ENCODE measurements at regions of chr11 and their contacts with region 1.

Region 1: GRCh38 chr11:64233913-64234834 is at the start of gene VEGFB:
- DNase-seq: peak; percentile 87
- CTCF ChIP-seq: no peak

Region 2: DNA sequence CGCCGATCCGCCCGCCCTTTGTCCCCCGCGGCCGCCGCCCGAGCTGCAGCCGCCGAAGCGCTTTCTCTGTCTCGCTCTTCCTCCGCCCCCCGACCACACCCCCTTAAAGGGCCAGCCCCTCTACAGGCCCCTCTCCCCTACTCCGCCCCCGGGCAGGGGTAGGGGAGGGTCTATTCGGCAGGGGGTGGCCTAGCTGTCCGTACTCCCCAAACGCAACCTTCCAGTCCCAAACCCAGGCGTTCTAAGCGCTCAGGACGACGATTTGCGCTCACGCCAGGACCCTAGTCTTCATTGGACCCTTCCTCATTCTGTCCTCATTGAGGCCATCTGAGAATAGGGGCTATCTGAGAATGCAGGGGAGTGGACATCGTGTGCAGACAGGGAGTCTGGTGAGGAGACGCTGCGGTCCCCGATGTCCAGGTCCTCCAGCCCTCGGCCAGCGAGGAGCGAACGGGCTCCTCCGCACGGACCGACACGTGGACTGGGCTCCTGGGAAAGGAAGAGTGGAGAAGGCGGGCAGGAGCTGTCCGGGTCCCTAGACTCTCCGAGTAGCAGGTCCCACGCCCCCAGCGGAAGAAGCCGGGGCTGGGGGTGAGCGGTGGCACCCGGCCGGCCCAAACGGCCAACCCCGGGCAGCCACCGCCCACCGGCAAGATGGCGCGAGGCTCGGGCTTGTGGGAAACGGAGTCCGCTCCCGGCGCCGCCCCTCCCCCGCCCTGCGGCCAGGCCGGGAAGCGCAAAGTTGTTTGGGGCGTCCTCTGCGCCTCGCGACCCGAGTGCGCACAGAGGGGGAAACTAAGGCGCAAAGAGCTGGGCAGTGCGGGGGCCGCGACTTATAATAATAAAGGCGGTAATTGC is 12.9 kb after region 1 on chr11 and contains the start of gene PPP1R14B:
- CTCF ChIA-PET with region 1: interaction called, 27 read pairs
- POLR2A ChIA-PET with region 1: no interaction called
- DNase-seq: peak; percentile 85
- CTCF ChIP-seq: no peak

Region 3: DNA sequence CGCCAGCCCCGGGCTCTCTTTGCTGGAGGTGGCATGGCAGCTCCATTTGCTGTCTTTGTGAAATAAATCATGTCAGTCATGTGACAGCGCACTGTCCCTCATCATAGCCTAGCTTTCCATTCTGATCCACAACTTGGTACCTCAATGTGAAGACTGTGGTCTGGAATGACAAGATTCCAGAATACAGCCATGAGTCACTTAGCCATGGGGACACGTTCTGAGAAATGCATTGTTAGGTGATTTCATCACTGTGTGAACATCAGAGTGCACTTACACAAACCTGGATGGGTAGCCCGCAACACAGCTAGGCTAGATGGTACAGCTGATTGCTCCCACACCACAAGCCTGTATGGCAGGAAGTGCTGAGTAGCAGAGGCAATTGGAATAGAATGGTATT is 152.1 kb after region 1 on chr11:
- CTCF ChIA-PET with region 1: no interaction called
- POLR2A ChIA-PET with region 1: no interaction called
- DNase-seq: no peak
- CTCF ChIP-seq: no peak

Measured in GM10248 (cell line).